HepG2 (cell line): ENCODE measurements at regions of chr19 and their contacts with region 1.

Region 1: GRCh38 chr19:13060964-13061927 is 41.4 kb downstream of the LYL1 start:
- DNase-seq: peak; percentile 70
- ATAC-seq: peak; percentile 76
- H3K4me3 ChIP-seq: peak overlapping the region; percentile 46 to 78 (median 54); a peak in 5 of 6 replicates
- H3K27ac ChIP-seq: peak overlapping the region; percentile 98
- H3K4me1 ChIP-seq: peaks cover 55% of the 10 kb centered on the region
- H3K27me3 ChIP-seq: no peaks in the 10 kb centered on the region
- CTCF ChIP-seq: peak; percentile 99
- EP300 ChIP-seq: no peak
- POLR2A ChIP-seq: peak in 1 of 2 experiments; percentile 56; a peak in 1 of 4 replicates
- RAD21 ChIP-seq: peak; percentile 99

Region 2: GRCh38 chr19:11505032-11505503 is 1556.2 kb before region 1 on chr19:
- CTCF ChIA-PET with region 1: no interaction called
- POLR2A ChIA-PET with region 1: no interaction called
- in situ Hi-C with region 1: no loop called
- intact Hi-C with region 1: no loop called
- DNase-seq: peak; percentile 91
- ATAC-seq: peak; percentile 96
- H3K4me3 ChIP-seq: peak overlapping the region; percentile 77 to 84 (median 81)
- H3K27ac ChIP-seq: peak overlapping the region; percentile 77
- H3K4me1 ChIP-seq: peaks cover 18% of the 10 kb centered on the region
- H3K27me3 ChIP-seq: no peaks in the 10 kb centered on the region
- CTCF ChIP-seq: no peak
- EP300 ChIP-seq: no peak
- POLR2A ChIP-seq: peak in 1 of 2 experiments; percentile 50; a peak in 1 of 4 replicates
- RAD21 ChIP-seq: no peak

Region 3: GRCh38 chr19:12983542-12984142 is 77.6 kb before region 1 on chr19:
- CTCF ChIA-PET with region 1: interaction called, 29 read pairs
- POLR2A ChIA-PET with region 1: interaction called, 66 read pairs
- in situ Hi-C with region 1: loop called (anchors 5 kb)
- intact Hi-C with region 1: loop called (anchors 1 kb)
- DNase-seq: peak; percentile 53
- ATAC-seq: peak; percentile 8; the same call in 1 of the 3 replicates
- H3K4me3 ChIP-seq: peak overlapping the region in 2 of 3 experiments; percentile 38 to 47; a peak in 1 of 6 replicates
- H3K27ac ChIP-seq: no peak overlapping the region
- H3K4me1 ChIP-seq: peaks cover 60% of the 10 kb centered on the region
- H3K27me3 ChIP-seq: peaks cover 0 to 5% of the 10 kb centered on the region in 2 experiments; a peak in 1 of 5 replicates
- CTCF ChIP-seq: peak; percentile 91
- EP300 ChIP-seq: peak; percentile 35 to 41; a peak in 2 of 4 replicates
- POLR2A ChIP-seq: no peak
- RAD21 ChIP-seq: peak; percentile 97

Region 4: DNA sequence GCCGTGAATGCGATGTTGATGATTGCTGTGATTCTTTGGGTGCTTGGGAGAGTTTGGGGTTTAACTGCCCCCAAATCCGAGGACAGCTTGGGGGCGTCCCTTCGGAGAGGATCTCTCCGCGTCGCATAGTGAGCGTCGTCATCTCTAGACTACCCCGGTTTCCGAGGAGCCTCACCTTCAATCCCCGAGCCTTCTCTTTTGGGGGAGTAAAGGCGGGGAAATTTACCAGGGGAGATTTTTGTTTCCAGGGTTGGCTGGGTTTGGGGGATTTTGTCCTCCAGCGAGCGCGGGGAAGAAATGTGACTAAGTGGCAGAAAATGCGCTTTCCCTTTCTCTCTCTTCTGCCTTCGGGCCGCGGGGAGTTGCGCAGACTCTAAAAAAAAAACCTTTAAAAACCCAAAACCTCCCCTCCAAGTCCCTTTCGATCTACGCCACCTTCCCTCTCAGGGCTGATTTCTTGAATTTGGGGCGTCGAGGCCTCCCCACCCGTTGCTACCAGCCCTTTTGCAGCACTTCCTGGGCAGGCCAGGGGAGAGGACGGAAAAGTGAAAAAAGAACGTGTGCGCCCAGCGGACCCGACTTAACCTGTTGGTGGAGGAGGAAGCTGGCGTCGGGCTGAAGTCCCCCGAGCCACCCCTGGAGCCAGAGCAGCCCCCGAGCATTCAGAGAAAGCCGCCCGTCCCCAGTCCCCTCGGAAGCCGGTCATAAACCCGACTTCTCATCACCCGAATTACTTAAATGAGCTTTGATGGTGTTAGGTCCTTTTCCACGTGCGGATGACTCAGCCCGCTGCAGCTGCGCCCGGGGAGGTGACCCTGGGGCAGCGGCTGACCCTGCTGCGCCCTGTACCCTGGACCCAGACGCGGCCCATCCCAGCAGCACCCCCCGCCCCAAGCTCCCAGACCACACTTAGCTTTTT is 48.3 kb before region 1 on chr19:
- CTCF ChIA-PET with region 1: no interaction called
- POLR2A ChIA-PET with region 1: interaction called, 21 read pairs
- in situ Hi-C with region 1: no loop called
- intact Hi-C with region 1: no loop called
- DNase-seq: peak; percentile 52
- ATAC-seq: peak; percentile 80
- H3K4me3 ChIP-seq: peak overlapping the region in 1 of 3 experiments; percentile 54; a peak in 1 of 6 replicates
- H3K27ac ChIP-seq: peak overlapping the region; percentile 73
- H3K4me1 ChIP-seq: peaks cover 31% of the 10 kb centered on the region
- H3K27me3 ChIP-seq: no peaks in the 10 kb centered on the region
- CTCF ChIP-seq: no peak
- EP300 ChIP-seq: peak in 1 of 2 experiments; percentile 45; a peak in 2 of 4 replicates
- POLR2A ChIP-seq: no peak
- RAD21 ChIP-seq: peak; percentile 44; the same call in 1 of the 2 replicates

Region 5: DNA sequence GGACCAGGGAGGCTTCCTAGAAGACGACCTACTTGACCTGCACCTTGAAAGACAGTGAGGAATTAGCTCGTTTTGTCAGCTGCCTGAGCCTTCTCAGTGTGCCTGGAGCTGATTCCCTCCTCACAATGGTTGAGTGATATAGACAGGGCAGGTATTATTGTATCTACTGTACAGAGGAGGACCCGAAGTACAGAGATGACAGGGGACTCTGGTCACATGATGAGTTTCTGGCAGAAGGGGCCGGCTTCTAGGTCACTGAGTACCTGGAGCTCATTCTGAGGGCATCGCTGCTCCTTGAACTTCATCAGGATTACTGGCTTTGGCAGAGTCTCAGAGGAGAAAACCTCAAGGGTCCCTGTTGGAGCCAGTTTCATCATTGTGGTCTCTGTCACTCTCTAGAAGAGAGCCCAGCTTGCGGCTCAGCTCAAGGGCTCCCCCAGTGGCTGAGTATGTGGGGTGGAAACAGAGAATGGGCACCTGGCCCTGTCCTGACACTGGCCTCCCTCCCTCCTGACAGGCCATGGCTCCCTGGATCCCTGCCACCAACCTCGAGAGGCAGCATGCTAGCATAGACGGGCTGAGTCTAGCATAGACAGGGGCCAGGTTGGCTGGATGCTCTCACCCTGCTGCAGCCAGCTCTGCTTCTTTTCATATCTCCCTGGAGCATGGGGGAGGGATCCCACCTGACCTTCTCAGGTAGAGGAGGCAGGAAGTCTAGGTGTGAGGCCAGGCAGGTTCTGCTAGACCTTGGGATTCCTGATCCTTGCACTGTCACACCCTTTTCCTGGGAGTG is 27.2 kb before region 1 on chr19:
- CTCF ChIA-PET with region 1: interaction called, 42 read pairs
- POLR2A ChIA-PET with region 1: interaction called, 128 read pairs
- in situ Hi-C with region 1: no loop called
- intact Hi-C with region 1: loop called (anchors 2 kb)
- DNase-seq: peak; percentile 55
- ATAC-seq: peak; percentile 81
- H3K4me3 ChIP-seq: no peak overlapping the region
- H3K27ac ChIP-seq: no peak overlapping the region
- H3K4me1 ChIP-seq: peaks cover 79% of the 10 kb centered on the region
- H3K27me3 ChIP-seq: no peaks in the 10 kb centered on the region
- CTCF ChIP-seq: peak; percentile 78
- EP300 ChIP-seq: no peak
- POLR2A ChIP-seq: no peak
- RAD21 ChIP-seq: peak; percentile 82

Region 6: DNA sequence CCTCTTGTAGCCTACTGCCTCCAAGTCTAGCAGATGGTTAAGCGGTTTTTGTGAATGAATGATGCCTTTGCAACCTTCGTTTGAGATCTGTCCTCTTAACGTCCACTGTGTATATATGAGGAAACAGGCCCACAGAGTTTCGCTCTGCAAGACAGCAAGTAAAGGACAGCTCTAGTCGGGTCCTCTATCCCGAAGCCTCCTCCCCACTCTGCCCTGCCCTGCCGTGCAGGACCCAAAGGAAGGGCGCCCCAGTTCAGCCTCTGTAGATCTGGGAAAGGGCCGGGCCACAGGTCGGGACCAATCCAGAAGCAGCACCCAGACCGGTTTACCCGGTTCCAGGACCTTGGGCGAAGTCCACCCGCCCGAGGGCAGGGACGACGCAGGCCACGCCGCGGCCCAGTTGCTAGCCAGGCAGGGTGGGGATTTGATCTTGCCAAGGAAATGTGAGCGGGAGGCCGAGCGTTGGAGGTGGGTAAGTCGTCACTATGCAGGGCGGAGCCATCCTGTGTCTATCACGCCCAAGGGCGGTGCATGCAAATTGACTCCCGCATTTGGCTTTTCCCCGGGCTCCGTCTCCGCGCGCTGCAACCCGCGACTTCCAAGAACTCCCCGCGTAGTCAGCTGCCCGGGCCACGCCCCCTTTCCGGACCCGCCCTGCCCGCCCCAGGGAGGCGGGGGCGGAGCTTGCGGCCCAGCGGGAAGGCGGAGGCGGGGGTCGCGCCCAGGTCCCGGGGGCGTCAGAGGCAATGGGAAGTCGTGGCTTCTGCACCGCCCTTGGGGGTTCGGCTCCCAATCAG is 101.5 kb after region 1 on chr19:
- CTCF ChIA-PET with region 1: no interaction called
- POLR2A ChIA-PET with region 1: interaction called, 12 read pairs
- in situ Hi-C with region 1: no loop called
- intact Hi-C with region 1: no loop called
- DNase-seq: peak; percentile 98
- ATAC-seq: peak; percentile 84
- H3K4me3 ChIP-seq: peak overlapping the region; percentile 63 to 81 (median 64)
- H3K27ac ChIP-seq: peak overlapping the region; percentile 99
- H3K4me1 ChIP-seq: peaks cover 52% of the 10 kb centered on the region
- H3K27me3 ChIP-seq: no peaks in the 10 kb centered on the region
- CTCF ChIP-seq: 0 out of 2 replicates have a peak, but pooled peaks have one; percentile 26
- EP300 ChIP-seq: no peak; a peak in 1 of 4 replicates
- POLR2A ChIP-seq: peak; percentile 82 to 90
- RAD21 ChIP-seq: peak; percentile 38